Left colon (tissue), 2 donors: ENCODE measurements at regions of chr22 and their contacts with region 1.

Region 1: GRCh38 chr22:17891481-17892167 is 117.4 kb upstream of the BID start:
- DNase-seq: peak; percentile 80 to 87
- ATAC-seq: peak; percentile 62

Region 2: GRCh38 chr22:17830043-17830961 is 61.3 kb before region 1 on chr22:
- intact Hi-C with region 1: loop called in 1 of 2 experiments (anchors 10 kb)
- DNase-seq: peak; percentile 79 to 88
- ATAC-seq: peak; percentile 71